HEK293 (cell line): ENCODE measurements at regions of chr17 and their contacts with region 1.

Region 1: DNA sequence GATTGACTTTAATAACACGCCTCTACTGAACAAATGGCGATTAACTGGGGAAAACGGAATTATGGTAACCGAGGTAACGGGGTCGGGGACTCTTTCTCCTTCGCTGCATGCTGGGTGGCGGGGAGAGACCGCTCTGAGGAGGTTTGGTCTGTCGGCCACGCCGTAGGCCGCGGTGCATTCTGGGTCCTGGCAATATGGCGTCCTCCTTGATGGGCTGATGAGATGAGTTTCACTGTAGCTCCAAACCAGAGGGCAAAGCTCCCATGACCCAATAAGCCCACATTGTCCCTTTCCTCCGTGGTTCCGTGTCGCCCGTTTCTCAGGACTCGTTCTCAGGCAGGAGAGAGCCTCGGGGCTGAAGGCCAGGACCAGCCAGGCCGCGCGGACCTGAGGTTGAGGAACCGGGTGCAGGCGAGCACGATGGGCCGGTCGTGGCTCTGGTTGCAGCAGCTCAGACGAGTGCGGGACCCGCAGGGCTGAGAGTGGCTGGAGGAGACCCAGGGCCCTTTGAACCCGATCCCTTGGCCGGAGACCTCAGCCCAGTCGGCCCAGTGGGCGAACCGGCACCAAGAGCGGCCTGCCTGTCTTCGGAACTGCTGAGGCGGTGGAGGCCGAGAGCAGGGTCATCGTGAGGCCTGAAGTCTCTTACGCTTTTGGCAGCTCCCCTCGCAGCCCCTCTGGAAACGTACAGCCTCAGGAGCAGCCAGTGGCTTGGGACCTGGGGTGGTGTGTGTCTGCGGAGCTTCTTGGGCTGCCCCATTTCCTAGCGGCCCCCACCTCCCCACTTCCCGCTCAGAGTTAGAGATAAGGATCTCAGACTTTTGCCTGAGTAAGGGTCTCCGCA is at the start of gene RPTOR:
- H3K4me3 ChIP-seq: peak within 1 kb of the TSS; percentile 99
- H3K27ac ChIP-seq: peak within 1 kb of the TSS; percentile 68
- H3K4me1 ChIP-seq: peaks cover 10% of the 10 kb centered on the region
- CTCF ChIP-seq: no peak

Region 2: DNA sequence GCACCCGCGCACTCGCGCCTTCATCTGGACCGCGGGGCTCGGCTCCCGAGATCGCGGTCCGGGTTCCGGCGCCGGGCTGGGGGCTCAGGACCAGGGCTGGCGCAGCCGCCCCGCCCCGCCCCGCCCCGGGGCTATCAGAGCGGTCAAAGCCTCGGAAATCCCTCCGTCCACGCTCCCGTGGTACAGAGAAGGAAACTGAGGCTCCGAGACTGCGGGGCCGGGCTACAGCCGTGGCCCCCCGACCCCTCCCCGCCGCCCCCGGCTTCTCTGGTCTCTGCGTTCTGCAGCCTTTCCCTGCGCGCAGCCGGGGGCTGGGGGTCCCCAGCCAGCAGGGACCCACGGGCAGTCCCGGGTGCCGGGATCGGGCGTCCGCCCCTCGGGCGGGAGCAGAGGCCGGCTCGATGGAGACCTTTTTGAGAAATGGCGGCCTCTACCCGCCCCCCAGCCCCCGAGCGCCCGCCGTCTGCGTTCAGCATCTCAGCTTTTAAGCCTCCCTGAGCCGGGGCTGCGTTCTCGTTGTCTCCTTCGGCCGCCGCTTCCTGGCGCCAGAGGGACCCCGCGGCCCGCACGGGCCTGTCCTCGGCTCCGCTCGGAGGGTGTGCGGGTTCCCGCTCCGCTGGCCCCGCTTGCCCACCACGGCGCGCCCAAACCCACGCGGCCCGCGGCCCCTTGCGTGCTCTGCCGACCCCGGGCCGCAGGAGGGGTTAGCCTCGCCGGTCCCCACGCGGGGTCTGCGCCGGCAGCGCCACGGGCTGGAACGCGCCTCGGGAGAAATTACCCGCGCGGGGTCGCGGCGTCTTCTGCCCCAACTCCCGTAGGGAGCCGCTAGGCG is 67.0 kb before region 1 on chr17:
- CTCF ChIA-PET with region 1: interaction called, 3 read pairs
- POLR2A ChIA-PET with region 1: interaction called, 22 read pairs
- H3K4me3 ChIP-seq: peak overlapping the region; percentile 49
- H3K27ac ChIP-seq: peak overlapping the region; percentile 86; the same call in 1 of the 2 replicates
- H3K4me1 ChIP-seq: peaks cover 7% of the 10 kb centered on the region
- CTCF ChIP-seq: peak; percentile 45; the same call in 1 of the 2 replicates

Region 3: DNA sequence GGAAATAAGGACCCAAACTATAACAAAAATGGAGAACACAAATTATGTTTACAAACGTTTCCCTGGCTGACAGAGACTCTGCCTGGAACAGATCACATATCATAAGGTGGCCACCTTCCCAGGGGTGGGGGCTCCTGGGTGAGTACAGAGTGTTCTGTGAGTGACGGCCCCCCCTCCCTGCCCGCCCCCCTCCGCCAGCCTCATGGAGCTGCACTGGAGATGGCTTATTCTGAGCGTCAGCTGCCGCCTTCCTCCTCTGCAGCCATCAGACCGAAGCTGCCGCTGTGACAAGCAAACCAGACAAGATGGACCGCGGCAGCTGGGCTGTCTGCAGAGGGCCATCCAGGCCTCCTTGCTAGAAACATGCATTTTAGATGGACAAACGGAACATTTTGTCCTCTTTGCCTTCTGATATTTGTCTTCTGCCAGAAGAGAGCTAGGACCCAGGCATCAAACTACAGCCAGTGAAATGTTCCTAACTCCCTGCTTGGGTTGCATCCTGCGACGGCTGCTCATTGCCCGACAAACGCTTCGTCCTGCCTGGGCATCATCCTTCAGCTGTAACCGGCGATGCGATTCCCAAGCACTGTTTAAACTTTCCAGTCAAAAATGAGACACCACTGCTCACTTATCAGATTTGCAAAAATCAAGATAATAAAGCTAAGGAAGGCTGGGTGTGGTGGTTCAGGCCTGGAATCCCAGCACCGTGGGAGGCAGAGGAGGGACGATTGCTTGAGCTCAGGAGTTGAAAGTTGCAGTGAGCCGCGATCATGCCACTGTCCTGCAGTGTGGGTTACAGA is 15.6 kb before region 1 on chr17:
- CTCF ChIA-PET with region 1: interaction called, 11 read pairs
- POLR2A ChIA-PET with region 1: interaction called, 5 read pairs
- H3K4me3 ChIP-seq: no peak overlapping the region
- H3K27ac ChIP-seq: no peak overlapping the region
- H3K4me1 ChIP-seq: no peaks in the 10 kb centered on the region
- CTCF ChIP-seq: no peak